Right ventricle myocardium superior (tissue), 1 donor: ENCODE measurements at regions of chr7 and their contacts with region 1.

Region 1: DNA sequence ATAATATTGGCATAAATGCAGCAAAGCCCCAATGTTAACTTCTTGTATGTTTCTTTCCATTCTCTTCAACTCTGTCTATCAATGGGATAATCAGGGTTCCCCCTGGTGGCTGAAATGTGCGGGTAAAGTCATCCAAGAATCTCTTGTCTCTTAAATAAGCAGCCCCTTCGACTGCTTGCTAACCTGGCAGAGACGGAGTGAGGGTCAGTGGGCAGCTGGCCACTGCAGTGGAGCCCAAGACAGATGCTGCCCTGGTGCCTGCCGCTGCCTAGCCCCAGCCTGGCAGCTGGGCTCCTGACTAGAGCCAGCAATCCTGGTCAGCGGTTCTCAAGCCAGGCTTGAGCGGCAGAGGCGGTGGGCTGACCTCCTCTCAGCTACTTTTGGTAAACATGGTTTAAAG is 248.9 kb downstream of the COBL start:
- DNase-seq: peak; percentile 63
- ATAC-seq: peak; percentile 60

Region 2: DNA sequence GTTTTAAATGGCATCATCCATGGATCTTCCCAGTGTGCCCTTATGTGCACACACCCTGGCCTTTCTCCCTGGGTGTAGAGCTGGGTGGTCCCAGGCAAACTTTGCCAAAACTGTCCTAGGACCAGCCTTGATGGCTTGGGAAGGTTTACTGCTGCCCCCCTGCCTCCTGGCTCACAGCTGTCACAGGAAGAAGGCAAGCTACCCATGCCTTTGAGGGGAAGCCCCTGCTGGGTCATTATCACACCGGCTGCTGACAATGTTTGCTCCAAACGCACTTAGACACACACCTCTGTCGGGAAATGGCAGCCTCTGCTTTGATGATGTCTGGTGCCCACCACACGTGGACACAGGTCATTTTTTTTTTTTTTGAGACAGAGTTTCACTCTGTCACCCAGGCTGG is 592.4 kb before region 1 on chr7:
- intact Hi-C with region 1: loop called (anchors 10 kb)
- DNase-seq: no peak
- ATAC-seq: no peak

Region 3: GRCh38 chr7:50793115-50793946 is 274.4 kb before region 1 on chr7:
- intact Hi-C with region 1: loop called (anchors 10 kb)
- DNase-seq: peak; percentile 82
- ATAC-seq: peak; percentile 90

Region 4: DNA sequence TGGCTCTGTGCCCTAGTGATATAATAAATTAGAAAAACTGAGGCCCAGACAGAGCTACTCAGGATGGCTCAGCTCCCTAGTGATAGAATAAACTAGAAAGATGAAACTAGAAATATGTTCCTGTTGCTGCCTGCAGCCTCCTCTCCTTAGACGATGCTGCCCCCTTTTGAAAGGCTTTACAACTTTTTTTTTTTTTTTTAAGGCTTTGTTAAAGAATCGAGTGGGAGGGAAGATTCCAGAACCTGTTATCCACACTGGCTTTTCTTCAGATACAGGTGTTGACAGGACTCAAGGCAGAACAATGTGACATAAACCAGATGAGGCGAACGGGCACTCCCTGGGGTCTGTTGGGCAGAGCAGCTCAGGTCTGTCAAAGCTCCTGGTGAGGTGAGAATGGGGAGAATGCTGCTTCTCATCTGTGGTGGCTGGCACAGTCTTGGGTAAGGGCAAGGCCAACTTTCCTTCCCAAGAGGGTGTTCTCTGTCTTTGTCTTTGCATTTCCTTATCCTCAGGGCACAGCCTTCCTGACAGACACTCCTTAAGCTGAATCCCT is 73.8 kb after region 1 on chr7:
- intact Hi-C with region 1: loop called (anchors 10 kb)
- DNase-seq: no peak
- ATAC-seq: peak; percentile 80